ENCODE measurements at regions of chrX and their contacts with region 1.

Region 1: GRCh38 chrX:119871599-119872395 is at the starts of genes NDUFA1 and RNF113A:
- DNase-seq: peak; percentile 72 to 95 (median 82)
- ATAC-seq: peak; percentile 87
- H3K4me3 ChIP-seq: peak within 1 kb of the TSS; percentile 86
- H3K4me3 Mint-ChIP-seq: peak within 1 kb of the TSS; percentile 97
- H3K27ac ChIP-seq: peak within 1 kb of the TSS; percentile 87 to 96
- H3K27ac Mint-ChIP-seq: peak within 1 kb of the TSS; percentile 94
- H3K4me1 ChIP-seq: peaks cover 21% of the 10 kb centered on the region
- H3K4me1 Mint-ChIP-seq: peaks cover 27% of the 10 kb centered on the region
- H3K27me3 ChIP-seq: no peaks in the 10 kb centered on the region
- H3K27me3 Mint-ChIP-seq: no peaks in the 10 kb centered on the region
- CTCF ChIP-seq: no peak
- total RNA-seq, gene NDUFA1: 45.4 to 46.2 TPM
- total RNA-seq, gene RNF113A: 32.5 to 33.5 TPM

Region 2: DNA sequence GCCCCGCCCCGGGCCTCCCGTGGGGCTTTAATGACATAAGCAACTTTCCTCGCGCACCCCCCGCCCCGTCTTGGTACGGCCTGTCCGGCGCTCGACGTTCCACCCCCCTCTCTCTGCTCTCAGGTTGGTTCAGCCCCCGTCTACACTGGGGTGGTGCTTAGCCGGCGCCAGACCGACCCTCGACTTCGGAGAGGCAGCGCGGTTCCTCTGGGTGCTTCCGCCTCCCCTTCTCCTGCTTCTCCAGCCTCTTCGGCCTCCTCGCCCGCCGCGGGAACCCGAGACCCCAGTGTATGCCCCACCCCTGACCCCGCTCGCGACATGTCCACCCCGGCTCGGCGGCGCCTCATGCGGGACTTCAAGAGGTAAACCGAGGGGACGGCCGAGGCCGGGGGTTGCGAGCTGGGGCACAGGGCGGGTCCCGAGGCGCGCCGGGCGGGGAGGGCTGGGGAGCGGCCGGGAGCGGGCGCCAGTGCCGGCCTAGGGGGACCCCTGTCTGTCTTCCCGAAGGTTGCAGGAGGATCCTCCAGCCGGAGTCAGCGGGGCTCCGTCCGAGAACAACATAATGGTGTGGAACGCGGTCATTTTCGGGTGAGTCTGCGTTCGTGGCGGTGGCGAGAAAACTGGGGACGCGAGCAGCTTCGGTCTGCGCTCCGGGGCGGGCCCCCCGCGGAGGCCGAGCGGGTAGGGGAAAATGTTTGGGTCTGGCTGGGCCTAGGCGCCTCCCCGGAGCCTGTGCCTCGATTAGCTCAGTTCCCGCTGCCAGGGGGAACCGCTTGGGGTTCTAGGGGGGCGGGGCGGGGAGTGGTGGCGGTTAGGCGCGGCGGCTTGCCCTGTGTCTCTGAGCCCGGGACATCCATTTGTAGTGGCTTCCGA is 297.2 kb before region 1 on chrX and contains the start of gene UBE2A:
- CTCF ChIA-PET with region 1: no interaction called
- POLR2A ChIA-PET with region 1: no interaction called
- intact Hi-C with region 1: loop called in 1 of 2 experiments (anchors 10 kb)
- DNase-seq: peak; percentile 81 to 94 (median 86)
- ATAC-seq: peak; percentile 90
- H3K4me3 ChIP-seq: peak within 1 kb of the TSS; percentile 75
- H3K4me3 Mint-ChIP-seq: peak within 1 kb of the TSS; percentile 94
- H3K27ac ChIP-seq: peak within 1 kb of the TSS; percentile 65 to 80
- H3K27ac Mint-ChIP-seq: peak within 1 kb of the TSS; percentile 97
- H3K4me1 ChIP-seq: peaks cover 14% of the 10 kb centered on the region
- H3K4me1 Mint-ChIP-seq: peaks cover 28% of the 10 kb centered on the region
- H3K27me3 ChIP-seq: no peaks in the 10 kb centered on the region
- H3K27me3 Mint-ChIP-seq: no peaks in the 10 kb centered on the region
- CTCF ChIP-seq: no peak
- total RNA-seq, gene UBE2A: 88.8 to 101 TPM

Region 3: GRCh38 chrX:119826399-119826959 is 45.3 kb before region 1 on chrX:
- CTCF ChIA-PET with region 1: no interaction called
- POLR2A ChIA-PET with region 1: interaction called, 9 read pairs
- intact Hi-C with region 1: loop called in 1 of 2 experiments (anchors 5 kb)
- DNase-seq: no peak
- ATAC-seq: no peak
- H3K4me3 ChIP-seq: no peak overlapping the region
- H3K4me3 Mint-ChIP-seq: no peak overlapping the region
- H3K27ac ChIP-seq: no peak overlapping the region
- H3K27ac Mint-ChIP-seq: no peak overlapping the region
- H3K4me1 ChIP-seq: peaks cover under 1% of the 10 kb centered on the region
- H3K4me1 Mint-ChIP-seq: peaks cover 15% of the 10 kb centered on the region
- H3K27me3 ChIP-seq: no peaks in the 10 kb centered on the region
- H3K27me3 Mint-ChIP-seq: no peaks in the 10 kb centered on the region
- CTCF ChIP-seq: no peak

Region 4: DNA sequence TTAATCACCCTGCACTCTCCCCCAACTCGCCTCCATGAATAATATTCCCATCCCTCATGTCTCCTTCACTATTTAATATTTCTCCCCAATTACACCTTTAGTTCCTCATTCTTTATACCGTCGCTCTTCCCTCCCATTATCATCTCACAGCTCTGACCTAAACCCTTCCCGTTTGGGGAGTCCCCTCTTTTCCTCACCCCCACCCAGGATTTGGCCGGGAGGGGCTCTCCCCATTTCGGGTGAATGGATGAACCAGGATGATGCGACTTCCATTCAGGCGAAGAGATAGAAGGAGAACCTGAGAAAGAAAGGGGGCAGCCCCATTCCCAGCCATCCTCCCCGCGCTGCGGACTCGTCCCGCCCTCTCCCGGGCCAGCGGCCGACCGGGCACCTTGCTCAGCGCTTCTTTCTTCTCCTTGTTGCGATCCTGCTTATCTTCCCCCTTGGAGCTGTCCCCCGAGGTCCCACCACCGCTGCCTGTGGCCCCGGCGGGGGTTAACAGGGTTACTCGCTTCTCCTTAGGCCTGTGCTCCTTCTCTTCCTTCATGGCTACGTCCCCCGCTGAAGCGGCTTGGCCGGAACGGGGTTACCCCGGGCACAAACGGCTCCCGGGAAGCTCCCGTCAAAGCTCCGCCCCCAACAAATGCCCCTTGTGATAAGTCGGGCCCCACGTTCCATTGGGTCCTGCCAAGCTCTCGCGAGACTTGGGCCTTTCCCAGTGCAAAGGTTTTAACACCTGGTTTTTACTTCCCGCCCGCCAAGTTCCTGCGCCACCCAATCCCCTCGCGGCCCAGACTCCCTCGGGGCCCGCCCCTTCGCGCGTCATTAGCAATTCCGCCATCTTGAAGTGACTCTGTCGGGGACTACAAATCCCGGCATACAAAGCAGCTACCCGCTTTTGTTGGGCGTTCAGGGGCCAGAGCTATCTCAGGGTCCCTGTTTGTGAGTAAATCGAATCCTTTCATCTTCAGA is 19.1 kb before region 1 on chrX and contains the start of gene UPF3B:
- CTCF ChIA-PET with region 1: no interaction called
- POLR2A ChIA-PET with region 1: interaction called, 63 read pairs
- intact Hi-C with region 1: loop called (anchors 1 to 2 kb)
- DNase-seq: peak; percentile 82 to 98 (median 90)
- ATAC-seq: peak; percentile 98
- H3K4me3 ChIP-seq: peak within 1 kb of the TSS; percentile 95
- H3K4me3 Mint-ChIP-seq: peak within 1 kb of the TSS; percentile 99
- H3K27ac ChIP-seq: peak within 1 kb of the TSS; percentile 82 to 93
- H3K27ac Mint-ChIP-seq: peak within 1 kb of the TSS; percentile 94
- H3K4me1 ChIP-seq: peaks cover 10% of the 10 kb centered on the region
- H3K4me1 Mint-ChIP-seq: peaks cover 22% of the 10 kb centered on the region
- H3K27me3 ChIP-seq: no peaks in the 10 kb centered on the region
- H3K27me3 Mint-ChIP-seq: no peaks in the 10 kb centered on the region
- CTCF ChIP-seq: no peak
- total RNA-seq, gene UPF3B: 4.7 to 5.7 TPM

Region 5: GRCh38 chrX:119887721-119888425 is 16.1 kb after region 1 on chrX:
- CTCF ChIA-PET with region 1: no interaction called
- POLR2A ChIA-PET with region 1: interaction called, 4 read pairs
- intact Hi-C with region 1: loop called in 1 of 2 experiments (anchors 2 kb)
- DNase-seq: peak; percentile 19 to 78 (median 40)
- ATAC-seq: peak; percentile 82
- H3K4me3 ChIP-seq: peak overlapping the region; percentile 45
- H3K4me3 Mint-ChIP-seq: peak overlapping the region; percentile 60
- H3K27ac ChIP-seq: no peak overlapping the region
- H3K27ac Mint-ChIP-seq: no peak overlapping the region
- H3K4me1 ChIP-seq: peaks cover 18% of the 10 kb centered on the region
- H3K4me1 Mint-ChIP-seq: peaks cover 5% of the 10 kb centered on the region
- H3K27me3 ChIP-seq: no peaks in the 10 kb centered on the region
- H3K27me3 Mint-ChIP-seq: no peaks in the 10 kb centered on the region
- CTCF ChIP-seq: peak; percentile 30

Region 6: DNA sequence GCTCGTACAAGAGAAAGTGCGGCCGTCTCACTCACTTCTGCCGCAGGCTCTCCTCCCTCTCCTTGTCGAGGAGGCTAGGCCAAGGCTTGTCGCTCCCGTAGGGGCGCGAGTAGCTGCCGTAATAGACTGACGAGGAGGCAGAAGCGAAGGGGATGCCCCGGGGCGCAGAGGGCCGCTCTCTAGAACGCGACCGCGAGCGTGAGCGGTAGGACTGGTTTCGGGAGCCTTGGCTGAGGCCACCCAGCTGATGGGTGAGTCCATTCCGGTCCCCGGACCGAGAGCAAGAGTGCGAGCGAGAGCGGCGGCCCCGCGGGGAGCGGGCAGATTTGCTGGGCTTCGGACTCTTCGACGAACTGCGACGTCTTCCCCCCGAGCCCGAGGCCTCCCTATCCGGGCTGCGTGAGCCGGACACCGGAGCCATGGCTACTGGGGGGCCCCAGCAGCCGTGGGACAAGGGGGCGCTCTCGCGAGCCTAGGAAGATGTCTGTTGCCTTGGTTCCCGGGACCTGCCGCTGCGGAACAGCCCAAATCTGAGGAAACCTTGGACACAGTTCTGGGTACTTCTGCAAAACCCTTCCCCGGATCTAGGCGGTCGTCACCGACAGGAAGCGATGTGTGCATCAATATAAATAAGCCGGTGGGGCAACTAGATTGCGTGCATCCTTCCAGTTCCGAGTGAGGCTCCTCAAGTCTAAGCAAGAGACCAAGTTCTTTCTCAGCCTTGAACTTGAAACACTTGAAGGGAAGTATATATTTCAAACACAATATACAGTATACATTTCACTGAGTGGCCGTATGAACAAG is 71.6 kb after region 1 on chrX and contains the start of gene NKAP:
- CTCF ChIA-PET with region 1: no interaction called
- POLR2A ChIA-PET with region 1: interaction called, 4 read pairs
- intact Hi-C with region 1: loop called in 1 of 2 experiments (anchors 2 kb)
- DNase-seq: peak; percentile 64 to 91 (median 72)
- ATAC-seq: peak; percentile 84
- H3K4me3 ChIP-seq: peak within 1 kb of the TSS; percentile 95
- H3K4me3 Mint-ChIP-seq: peak within 1 kb of the TSS; percentile 96
- H3K27ac ChIP-seq: peak within 1 kb of the TSS; percentile 91 to 93
- H3K27ac Mint-ChIP-seq: peak within 1 kb of the TSS; percentile 87
- H3K4me1 ChIP-seq: peaks cover 19% of the 10 kb centered on the region
- H3K4me1 Mint-ChIP-seq: peaks cover 27% of the 10 kb centered on the region
- H3K27me3 ChIP-seq: no peaks in the 10 kb centered on the region
- H3K27me3 Mint-ChIP-seq: peaks cover 2% of the 10 kb centered on the region
- CTCF ChIP-seq: no peak
- total RNA-seq, gene NKAP: 14.5 to 15.6 TPM

Measured in CD4-positive, alpha-beta T cell (primary cell).